ENCODE measurements at regions of chr14 and their contacts with region 1.

Region 1: DNA sequence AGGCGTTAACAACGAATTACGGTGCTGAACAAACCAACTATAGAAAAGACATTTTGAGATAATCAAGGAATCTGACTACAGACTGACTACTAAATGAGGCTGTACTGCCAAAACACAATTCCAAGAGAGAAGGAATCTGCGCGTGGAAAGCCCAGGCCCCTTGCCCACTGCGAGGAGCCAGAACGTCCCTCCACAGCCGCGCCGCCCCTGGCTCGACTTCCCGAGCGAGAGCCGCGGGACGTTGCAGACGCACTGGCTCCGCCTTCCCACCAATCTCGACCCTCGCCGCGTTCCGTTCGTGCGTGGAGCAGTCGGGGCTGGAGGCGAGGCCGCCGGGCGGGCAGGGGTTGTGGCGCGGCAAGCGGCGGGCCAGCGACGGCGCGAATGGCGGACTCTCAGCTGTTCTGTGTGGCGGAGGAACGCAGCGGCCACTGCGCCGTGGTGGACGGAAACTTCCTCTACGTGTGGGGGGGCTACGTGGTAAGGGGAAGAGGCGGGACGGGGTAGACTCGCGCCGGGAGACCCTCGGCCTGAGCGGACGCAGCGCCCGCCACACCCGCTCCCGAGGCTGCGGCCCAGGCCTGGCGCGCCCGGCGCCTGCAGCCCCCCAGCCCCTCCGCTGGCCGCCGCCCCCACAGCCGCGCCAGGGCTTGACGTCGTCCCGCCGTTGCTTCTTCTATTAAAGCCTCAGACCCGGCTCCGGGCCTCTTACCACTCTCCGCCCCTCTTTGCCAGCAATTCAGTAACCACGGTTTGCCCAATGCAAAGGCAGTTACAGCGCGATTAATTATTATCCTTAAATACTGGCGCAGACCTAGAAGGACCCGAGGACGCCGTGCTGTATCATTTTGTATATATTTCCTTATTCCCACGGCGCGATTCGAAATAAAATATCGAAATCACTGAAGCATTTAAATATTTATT is at the start of gene KLHDC1:
- DNase-seq: peak; percentile 85
- ATAC-seq: peak; percentile 78
- H3K4me3 ChIP-seq: peak within 1 kb of the TSS; percentile 44 to 74 (median 72)
- H3K4me3 Mint-ChIP-seq: peak within 1 kb of the TSS; percentile 92
- H3K27ac ChIP-seq: peak within 1 kb of the TSS; percentile 47 to 83
- H3K27ac Mint-ChIP-seq: peak within 1 kb of the TSS; percentile 87
- H3K4me1 ChIP-seq: peaks cover 9 to 11% of the 10 kb centered on the region in 2 donors
- H3K4me1 Mint-ChIP-seq: peaks cover 23% of the 10 kb centered on the region
- H3K27me3 ChIP-seq: no peaks in the 10 kb centered on the region
- H3K27me3 Mint-ChIP-seq: no peaks in the 10 kb centered on the region
- CTCF ChIP-seq: no peak
- total RNA-seq, gene KLHDC1: 11.7 and 13.7 TPM in 2 replicates

Region 2: DNA sequence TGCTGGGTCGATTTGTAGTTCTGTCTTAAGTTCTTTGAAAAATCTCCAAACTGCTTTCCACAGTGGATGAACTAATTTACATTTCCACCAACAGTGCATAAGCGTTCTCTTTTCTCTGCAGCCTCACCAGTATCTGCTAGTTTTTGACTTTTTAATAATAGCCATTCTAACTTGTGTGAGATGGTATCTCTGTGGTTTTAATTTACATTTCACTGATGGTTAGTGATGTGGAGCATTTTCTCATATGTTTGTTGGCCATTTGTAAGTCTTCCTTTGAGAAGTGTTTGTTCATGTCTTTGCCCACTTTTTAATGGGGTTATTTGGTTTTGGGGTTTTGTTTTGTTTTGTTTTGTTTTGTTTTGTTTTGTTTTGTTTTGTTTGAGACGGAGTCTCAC is 132.7 kb before region 1 on chr14:
- CTCF ChIA-PET with region 1: no interaction called
- POLR2A ChIA-PET with region 1: no interaction called
- intact Hi-C with region 1: no loop called
- DNase-seq: no peak
- ATAC-seq: no peak
- H3K4me3 ChIP-seq: no peak overlapping the region
- H3K4me3 Mint-ChIP-seq: no peak overlapping the region
- H3K27ac ChIP-seq: no peak overlapping the region
- H3K27ac Mint-ChIP-seq: no peak overlapping the region
- H3K4me1 ChIP-seq: no peaks in the 10 kb centered on the region
- H3K4me1 Mint-ChIP-seq: peaks cover 9% of the 10 kb centered on the region
- H3K27me3 ChIP-seq: no peaks in the 10 kb centered on the region
- H3K27me3 Mint-ChIP-seq: peaks cover 3% of the 10 kb centered on the region
- CTCF ChIP-seq: no peak

Region 3: DNA sequence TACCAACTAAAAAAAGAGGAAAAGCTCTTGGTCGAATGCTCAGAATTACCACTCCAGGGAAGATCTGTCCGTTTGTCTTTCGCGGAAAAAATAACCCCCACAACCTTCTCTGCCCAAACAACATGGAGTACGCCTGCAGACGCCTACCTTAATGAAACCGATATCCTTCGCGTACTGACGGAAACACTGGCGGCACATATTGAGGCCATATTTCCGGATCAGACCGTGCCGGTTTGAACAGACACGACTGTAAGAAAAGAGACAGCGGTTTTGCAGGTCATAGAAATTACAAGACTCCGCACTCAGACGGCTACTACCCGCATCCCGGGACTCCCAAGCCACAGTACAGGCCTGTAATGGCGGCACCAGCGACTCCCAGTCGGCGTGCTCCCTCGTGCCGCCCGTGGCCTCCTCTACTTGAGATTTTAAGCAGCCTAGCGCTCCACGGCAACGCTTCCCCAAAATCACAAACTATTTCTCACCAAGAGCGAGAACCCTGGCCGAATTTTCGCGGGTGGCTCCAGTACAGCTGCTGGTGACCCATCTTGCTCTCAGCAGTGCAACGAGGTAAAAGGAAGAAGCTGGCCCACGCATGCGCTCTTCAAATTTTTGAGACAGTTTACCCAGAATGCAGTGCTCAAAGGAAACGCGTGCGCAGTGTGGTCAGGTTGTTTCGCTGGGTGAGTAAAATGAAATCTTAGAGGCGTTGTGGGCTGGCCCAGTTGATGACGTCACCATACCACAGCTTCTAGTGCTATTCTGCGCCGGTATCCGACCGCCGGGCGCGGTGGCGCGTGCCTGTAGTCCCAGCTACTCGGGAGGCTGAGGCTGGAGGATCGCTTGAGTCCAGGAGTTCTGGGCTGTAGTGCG is 107.0 kb before region 1 on chr14 and contains the start of gene RPS29:
- CTCF ChIA-PET with region 1: no interaction called
- POLR2A ChIA-PET with region 1: no interaction called
- intact Hi-C with region 1: loop called (anchors 1 kb)
- DNase-seq: peak; percentile 100
- ATAC-seq: peak; percentile 86
- H3K4me3 ChIP-seq: peak within 1 kb of the TSS; percentile 70 to 100 (median 88)
- H3K4me3 Mint-ChIP-seq: peak within 1 kb of the TSS; percentile 88
- H3K27ac ChIP-seq: peak within 1 kb of the TSS; percentile 88 to 95
- H3K27ac Mint-ChIP-seq: peak within 1 kb of the TSS; percentile 100
- H3K4me1 ChIP-seq: peaks cover 17 to 24% of the 10 kb centered on the region in 2 donors
- H3K4me1 Mint-ChIP-seq: peaks cover 46% of the 10 kb centered on the region
- H3K27me3 ChIP-seq: no peaks in the 10 kb centered on the region
- H3K27me3 Mint-ChIP-seq: no peaks in the 10 kb centered on the region
- CTCF ChIP-seq: no peak
- total RNA-seq, gene RPS29: 2,497 and 2,873 TPM in 2 replicates

Region 4: DNA sequence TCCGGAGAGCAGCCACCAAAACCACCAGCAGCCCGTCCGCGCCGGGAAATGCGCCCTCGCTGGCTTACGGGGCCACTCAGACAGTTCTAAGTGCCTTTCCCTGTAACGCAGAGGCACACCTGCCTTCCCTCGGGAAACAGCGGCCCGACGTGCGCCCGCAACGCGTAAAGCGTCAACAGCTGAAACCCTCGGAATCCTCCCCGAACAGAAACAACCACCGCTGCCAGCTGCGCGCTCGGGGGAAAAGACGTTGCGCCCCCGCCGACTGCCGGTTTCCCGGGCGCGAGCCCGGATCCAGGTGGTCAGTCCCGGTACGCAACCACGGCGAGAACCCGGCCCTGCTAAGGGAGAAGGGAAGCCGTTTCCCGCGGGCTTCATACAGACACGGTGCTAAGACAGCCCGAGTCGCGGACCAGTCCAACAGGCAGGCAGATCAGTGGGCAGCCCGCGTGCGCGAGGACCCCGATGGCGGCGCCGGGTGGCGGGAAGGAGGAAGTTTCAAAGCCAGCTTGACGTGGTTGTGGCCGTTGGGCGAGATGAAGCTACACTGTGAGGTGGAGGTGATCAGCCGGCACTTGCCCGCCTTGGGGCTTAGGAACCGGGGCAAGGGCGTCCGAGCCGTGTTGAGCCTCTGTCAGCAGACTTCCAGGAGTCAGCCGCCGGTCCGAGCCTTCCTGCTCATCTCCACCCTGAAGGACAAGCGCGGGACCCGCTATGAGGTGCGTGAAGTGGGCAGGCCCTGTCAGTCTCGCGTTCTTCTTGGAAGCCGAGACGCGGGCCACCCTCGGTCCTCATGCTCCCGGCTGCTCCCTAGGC is 94.4 kb before region 1 on chr14 and contains the start of gene LRR1:
- CTCF ChIA-PET with region 1: no interaction called
- POLR2A ChIA-PET with region 1: interaction called, 6 read pairs
- intact Hi-C with region 1: loop called (anchors 1 kb)
- DNase-seq: peak; percentile 95
- ATAC-seq: peak; percentile 73
- H3K4me3 ChIP-seq: peak within 1 kb of the TSS; percentile 75 to 94 (median 80)
- H3K4me3 Mint-ChIP-seq: peak within 1 kb of the TSS; percentile 99
- H3K27ac ChIP-seq: peak within 1 kb of the TSS; percentile 92 to 97
- H3K27ac Mint-ChIP-seq: peak within 1 kb of the TSS; percentile 98
- H3K4me1 ChIP-seq: peaks cover 33 to 42% of the 10 kb centered on the region in 2 donors
- H3K4me1 Mint-ChIP-seq: peaks cover 55% of the 10 kb centered on the region
- H3K27me3 ChIP-seq: no peaks in the 10 kb centered on the region
- H3K27me3 Mint-ChIP-seq: no peaks in the 10 kb centered on the region
- CTCF ChIP-seq: no peak
- total RNA-seq, gene LRR1: 10.3 and 13.0 TPM in 2 replicates

Region 5: DNA sequence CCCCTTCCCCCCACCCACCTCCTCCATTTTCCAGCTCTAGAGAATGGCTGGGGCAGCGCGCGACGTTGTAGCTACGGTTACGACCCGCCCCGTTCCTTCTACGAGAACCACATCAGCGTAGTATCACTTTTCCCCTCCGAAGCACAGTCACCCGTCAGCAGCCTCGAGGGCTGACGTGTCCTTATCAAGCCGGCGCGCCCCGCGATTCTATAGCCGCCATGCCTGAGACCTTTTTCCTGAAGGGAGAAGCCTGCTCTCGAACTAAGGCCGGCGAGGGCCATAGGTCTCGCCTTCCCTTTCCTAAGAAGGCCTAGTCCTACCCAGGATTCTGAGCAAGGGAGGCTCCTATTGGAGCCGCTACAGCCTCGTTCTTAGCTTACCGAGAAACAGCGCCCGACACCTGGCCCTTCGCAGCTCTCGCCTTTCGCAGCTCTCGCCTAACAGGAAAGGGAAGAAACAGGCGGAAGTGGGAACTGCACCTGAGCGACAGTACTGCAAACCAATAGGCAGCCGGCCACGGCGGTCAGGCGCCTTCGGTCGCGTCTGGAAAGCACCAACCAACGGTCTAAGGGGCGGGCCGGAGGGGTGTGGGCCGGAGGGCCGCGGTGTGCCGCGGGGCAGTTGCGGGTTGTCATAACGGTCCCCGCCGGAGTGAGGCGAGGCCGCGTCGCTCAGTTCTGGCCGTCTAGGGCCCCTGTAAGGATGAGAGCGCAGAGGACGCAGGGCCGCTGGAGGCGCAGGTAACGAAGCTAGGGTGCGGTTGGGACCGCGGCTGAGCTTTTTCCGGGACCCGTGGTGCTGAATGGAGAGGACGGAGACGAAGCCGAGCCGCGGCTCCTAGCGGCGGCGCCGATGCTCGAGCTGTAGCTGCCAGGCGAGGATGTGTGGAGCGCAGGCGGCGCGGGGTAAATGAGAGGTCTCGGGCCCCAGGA is 72.6 kb before region 1 on chr14 and contains the starts of genes MGAT2 and RPL36AL:
- CTCF ChIA-PET with region 1: interaction called, 4 read pairs
- POLR2A ChIA-PET with region 1: no interaction called
- intact Hi-C with region 1: loop called (anchors 1 kb)
- DNase-seq: peak; percentile 98
- ATAC-seq: peak; percentile 93
- H3K4me3 ChIP-seq: peak within 1 kb of the TSS; percentile 90 to 99 (median 97)
- H3K4me3 Mint-ChIP-seq: peak within 1 kb of the TSS; percentile 99
- H3K27ac ChIP-seq: peak within 1 kb of the TSS; percentile 96 to 98
- H3K27ac Mint-ChIP-seq: peak within 1 kb of the TSS; percentile 99
- H3K4me1 ChIP-seq: peaks cover 31 to 44% of the 10 kb centered on the region in 2 donors
- H3K4me1 Mint-ChIP-seq: peaks cover 55% of the 10 kb centered on the region
- H3K27me3 ChIP-seq: no peaks in the 10 kb centered on the region
- H3K27me3 Mint-ChIP-seq: no peaks in the 10 kb centered on the region
- CTCF ChIP-seq: peak; percentile 43
- total RNA-seq, gene MGAT2: 36.2 and 39.9 TPM in 2 replicates
- total RNA-seq, gene RPL36AL: 151 and 171 TPM in 2 replicates

Region 6: GRCh38 chr14:50116181-50116956 is 423.3 kb after region 1 on chr14 and contains the start of gene VCPKMT:
- CTCF ChIA-PET with region 1: no interaction called
- POLR2A ChIA-PET with region 1: no interaction called
- intact Hi-C with region 1: loop called (anchors 5 kb)
- DNase-seq: peak; percentile 97
- ATAC-seq: peak; percentile 97
- H3K4me3 ChIP-seq: peak within 1 kb of the TSS; percentile 69 to 92 (median 87)
- H3K4me3 Mint-ChIP-seq: peak within 1 kb of the TSS; percentile 98
- H3K27ac ChIP-seq: peak within 1 kb of the TSS; percentile 92 to 99
- H3K27ac Mint-ChIP-seq: peak within 1 kb of the TSS; percentile 98
- H3K4me1 ChIP-seq: peaks cover 44 to 45% of the 10 kb centered on the region in 2 donors
- H3K4me1 Mint-ChIP-seq: peaks cover 45% of the 10 kb centered on the region
- H3K27me3 ChIP-seq: no peaks in the 10 kb centered on the region
- H3K27me3 Mint-ChIP-seq: no peaks in the 10 kb centered on the region
- CTCF ChIP-seq: no peak
- total RNA-seq, gene VCPKMT: 22.8 and 27.1 TPM in 2 replicates